GM18951 (cell line): ENCODE measurements at regions of chr11 and their contacts with region 1.

Region 1: DNA sequence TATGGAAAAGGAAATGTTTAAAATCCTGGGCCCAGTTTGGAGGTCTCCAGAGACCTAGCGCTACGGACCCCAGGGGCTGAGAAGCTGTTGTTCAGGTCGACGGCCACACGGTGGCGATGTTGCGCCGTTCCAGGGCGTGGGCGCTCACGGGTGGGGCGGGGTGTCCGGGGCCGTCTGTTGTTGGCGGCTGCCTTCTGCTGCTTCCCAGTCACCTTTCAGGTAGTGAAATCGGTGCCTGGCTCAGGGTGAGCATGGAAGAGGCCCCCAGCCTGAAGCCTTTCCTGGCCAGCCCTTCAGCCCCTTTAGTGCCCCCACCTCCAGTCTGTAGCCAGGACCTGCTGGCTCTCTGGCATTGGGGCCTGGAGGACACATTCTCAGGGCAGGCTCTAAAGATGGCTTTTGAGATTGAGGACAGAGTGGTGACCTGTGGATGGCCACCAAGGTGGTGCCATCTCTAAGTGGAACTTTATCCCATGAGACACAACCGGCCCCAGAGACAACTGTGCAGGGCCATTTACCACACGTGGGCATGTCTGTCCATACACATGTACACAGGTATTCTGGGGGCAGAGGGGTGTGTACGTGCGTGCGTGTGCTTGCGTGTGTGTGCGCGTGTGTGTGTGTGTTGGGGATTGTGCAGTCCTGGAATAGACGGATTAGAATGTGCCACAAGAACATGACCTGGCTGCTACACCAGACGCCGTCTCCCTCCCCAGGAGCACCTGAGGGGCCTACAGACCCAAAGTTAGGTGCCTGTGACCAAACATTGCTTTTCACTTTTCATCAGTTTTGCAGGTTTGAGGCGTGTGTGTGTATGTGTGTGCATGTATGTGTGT is 53.8 kb downstream of the ST14 start:
- POLR2A ChIP-seq: no peak

Region 2: DNA sequence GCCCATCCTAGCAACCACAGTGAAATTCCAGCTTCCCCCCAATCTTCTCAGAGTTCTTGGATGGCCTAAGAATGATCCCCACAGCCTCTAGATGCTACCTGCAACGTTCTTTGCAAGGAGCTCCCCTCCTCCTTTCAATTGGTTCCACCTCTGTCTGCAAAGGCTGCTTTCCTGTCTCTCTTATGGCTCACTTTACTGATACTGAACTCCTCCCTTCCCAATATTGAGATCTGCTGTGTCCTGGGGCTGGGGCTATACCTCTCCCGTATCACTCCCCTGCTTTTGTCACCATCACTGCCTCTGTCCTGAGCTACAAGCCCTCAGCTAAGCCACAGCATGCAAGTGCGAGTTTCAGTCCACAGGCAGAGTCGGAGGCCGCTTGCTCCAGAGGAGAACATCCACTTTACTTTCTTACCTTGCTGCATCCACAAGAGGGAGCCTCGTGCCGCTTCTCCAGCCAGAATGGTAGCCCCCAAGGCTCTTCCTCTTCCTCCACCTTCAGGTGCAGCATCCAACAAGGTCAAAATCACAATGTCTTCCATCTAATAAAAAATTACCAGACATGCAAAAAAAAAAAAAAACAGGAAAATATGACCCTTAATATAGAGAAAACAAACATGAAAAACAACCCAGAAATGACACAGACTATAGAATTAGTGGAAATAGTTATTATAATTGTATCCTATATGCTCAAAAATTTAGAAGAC is 446.3 kb before region 1 on chr11:
- in situ Hi-C with region 1: no loop called
- POLR2A ChIP-seq: no peak

Region 3: DNA sequence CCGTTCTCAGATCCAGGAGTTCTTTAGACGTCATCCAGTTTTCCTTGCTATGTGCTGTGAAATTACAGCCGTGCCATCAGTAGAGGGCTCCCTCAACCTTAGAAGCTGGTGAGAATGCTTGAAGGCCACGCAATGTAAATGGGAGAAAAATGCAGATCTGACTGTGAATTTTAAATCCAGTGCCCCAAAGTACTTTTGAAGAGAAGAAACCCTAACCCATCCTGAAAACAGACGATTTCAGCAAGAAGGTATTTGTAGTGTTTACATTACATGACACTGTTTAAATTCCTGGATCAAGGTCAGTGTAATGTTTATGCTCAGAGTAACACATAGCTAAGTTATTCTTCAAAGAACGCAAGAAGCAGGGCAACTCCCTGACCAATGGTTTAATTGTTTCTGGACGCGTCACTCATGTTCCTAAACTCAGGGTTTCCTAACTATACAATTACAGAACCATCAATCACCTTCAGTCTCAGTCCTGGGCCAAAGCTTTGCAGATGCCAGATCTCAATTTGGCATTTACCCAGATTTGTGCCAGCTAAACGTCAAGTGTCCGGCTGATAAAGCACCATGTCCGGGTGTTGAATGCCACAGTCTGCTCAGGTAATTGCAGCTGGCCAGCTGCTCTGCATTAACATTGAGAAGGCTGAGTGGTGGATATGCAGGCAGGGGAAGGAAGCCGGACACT is 176.9 kb after region 1 on chr11:
- in situ Hi-C with region 1: loop called (anchors 25 kb)
- POLR2A ChIP-seq: no peak

Region 4: DNA sequence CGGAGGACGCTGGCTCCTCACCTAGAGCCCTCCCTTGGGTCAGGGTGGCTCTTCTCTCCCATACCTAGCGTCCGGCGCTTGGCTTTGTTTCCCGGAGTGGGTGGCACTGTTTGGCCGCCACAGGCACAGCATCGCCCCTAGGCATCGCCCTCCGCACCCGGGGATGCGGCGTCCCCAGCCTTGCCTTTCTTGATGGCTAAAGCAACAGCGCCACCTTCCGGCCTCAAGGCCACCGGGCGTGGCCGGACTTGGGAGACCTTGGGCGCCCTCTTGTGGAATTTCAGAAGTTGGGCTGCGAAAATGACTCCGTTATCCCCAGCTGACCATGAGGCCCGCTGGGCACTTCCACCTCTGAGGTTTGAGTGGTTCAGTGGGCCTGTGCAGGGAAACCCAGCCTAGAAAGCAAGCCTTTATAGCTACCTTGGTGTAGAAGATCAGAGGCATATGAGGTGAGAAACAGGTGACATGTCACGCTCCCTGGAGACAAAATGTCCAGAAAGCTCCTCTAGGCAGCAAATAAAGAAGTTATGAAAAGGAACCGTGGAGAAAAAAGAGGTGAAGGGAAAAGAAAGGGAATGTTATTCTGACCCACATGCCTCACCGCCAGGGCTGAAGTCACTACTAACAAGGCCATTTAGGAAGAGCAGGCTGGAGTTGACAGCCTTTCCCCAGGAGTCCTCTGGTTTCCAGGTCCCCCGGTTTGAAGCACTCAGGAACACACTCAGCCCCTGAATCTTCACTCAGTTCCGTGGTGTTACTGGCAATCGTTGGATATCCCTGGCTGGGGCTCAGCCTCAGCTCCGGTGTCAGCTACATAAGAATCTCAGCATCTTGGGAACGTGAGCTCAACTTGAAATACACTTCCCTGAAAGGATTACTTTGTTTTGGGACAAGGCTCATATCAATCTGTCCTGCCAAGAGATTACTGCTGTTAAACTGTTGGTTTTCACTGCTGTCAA is 648.8 kb after region 1 on chr11:
- in situ Hi-C with region 1: loop called (anchors 25 kb)
- POLR2A ChIP-seq: no peak